Caco-2 (cell line): ENCODE measurements at regions of chr1 and their contacts with region 1.

Region 1: GRCh38 chr1:27300341-27301051 is 21.5 kb upstream of the TMEM222 start:
- DNase-seq: peak; percentile 56 to 74
- H3K4me3 ChIP-seq: no peak overlapping the region
- H3K4me3 Mint-ChIP-seq: no peak overlapping the region
- H3K27ac Mint-ChIP-seq: no peak overlapping the region
- H3K4me1 ChIP-seq: peaks cover 11% of the 10 kb centered on the region
- H3K4me1 Mint-ChIP-seq: peaks cover 7% of the 10 kb centered on the region
- H3K27me3 ChIP-seq: no peaks in the 10 kb centered on the region
- H3K27me3 Mint-ChIP-seq: no peaks in the 10 kb centered on the region
- CTCF ChIP-seq: peak; percentile 91 to 94

Region 2: GRCh38 chr1:26799479-26800142 is 500.9 kb before region 1 on chr1:
- CTCF ChIA-PET with region 1: no interaction called
- POLR2A ChIA-PET with region 1: no interaction called
- intact Hi-C with region 1: no loop called
- DNase-seq: no peak
- H3K4me3 ChIP-seq: no peak overlapping the region
- H3K4me3 Mint-ChIP-seq: no peak overlapping the region
- H3K27ac Mint-ChIP-seq: no peak overlapping the region
- H3K4me1 ChIP-seq: no peaks in the 10 kb centered on the region
- H3K4me1 Mint-ChIP-seq: no peaks in the 10 kb centered on the region
- H3K27me3 ChIP-seq: no peaks in the 10 kb centered on the region
- H3K27me3 Mint-ChIP-seq: no peaks in the 10 kb centered on the region
- CTCF ChIP-seq: no peak

Region 3: GRCh38 chr1:27349784-27350662 is 49.5 kb after region 1 on chr1:
- CTCF ChIA-PET with region 1: interaction called, 16 read pairs
- POLR2A ChIA-PET with region 1: no interaction called
- intact Hi-C with region 1: loop called (anchors 10 kb)
- DNase-seq: peak; percentile 83 to 84
- H3K4me3 ChIP-seq: peak overlapping the region; percentile 73
- H3K4me3 Mint-ChIP-seq: peak overlapping the region; percentile 90
- H3K27ac Mint-ChIP-seq: peak overlapping the region; percentile 84
- H3K4me1 ChIP-seq: 0 out of 2 replicates have a peak, but pooled peaks cover 15% of the 10 kb centered on the region
- H3K4me1 Mint-ChIP-seq: peaks cover 13% of the 10 kb centered on the region
- H3K27me3 ChIP-seq: no peaks in the 10 kb centered on the region
- H3K27me3 Mint-ChIP-seq: no peaks in the 10 kb centered on the region
- CTCF ChIP-seq: no peak

Region 4: DNA sequence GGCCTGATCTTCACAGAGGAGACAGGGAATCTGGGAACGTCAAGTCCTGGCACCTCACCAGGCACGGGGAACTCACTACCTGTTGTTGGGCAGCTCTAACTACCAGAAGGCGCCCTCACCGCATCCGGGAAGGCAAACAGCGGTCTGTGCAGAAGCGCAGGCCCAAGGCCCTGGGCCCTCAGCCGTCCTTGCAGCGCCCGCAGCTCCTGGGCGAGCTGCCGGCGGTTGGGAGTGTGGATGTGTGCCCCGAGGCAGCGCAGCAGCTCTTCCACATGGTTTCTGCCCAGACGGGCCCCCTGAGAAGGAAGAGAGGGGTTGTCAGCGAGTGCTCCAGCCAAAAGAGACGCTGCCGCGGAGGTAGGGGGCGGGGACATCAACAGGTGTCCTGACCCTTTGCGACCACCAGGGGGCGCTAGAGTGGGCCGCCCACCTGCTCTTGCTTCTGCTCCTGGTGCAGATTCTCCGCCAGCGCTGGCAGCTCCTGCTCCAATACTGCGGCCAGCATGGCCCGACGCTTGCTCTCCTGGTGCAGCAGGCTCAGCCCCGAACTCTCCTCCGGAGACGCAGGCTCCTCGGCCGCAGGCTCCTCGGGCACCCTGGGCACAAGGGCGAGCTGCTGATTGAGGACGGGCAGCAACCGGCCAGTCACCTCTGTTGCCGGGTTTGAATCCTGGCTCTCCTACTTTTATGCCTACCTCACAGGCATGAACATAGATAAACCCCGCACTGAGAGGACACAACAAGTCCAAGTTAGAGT is 57.0 kb after region 1 on chr1:
- CTCF ChIA-PET with region 1: interaction called, 3 read pairs
- POLR2A ChIA-PET with region 1: no interaction called
- intact Hi-C with region 1: loop called (anchors 10 kb)
- DNase-seq: peak; percentile 50 to 71
- H3K4me3 ChIP-seq: no peak overlapping the region
- H3K4me3 Mint-ChIP-seq: no peak overlapping the region
- H3K27ac Mint-ChIP-seq: no peak overlapping the region
- H3K4me1 ChIP-seq: no peaks in the 10 kb centered on the region
- H3K4me1 Mint-ChIP-seq: no peaks in the 10 kb centered on the region
- H3K27me3 ChIP-seq: no peaks in the 10 kb centered on the region
- H3K27me3 Mint-ChIP-seq: no peaks in the 10 kb centered on the region
- CTCF ChIP-seq: peak; percentile 79 to 83

Region 5: DNA sequence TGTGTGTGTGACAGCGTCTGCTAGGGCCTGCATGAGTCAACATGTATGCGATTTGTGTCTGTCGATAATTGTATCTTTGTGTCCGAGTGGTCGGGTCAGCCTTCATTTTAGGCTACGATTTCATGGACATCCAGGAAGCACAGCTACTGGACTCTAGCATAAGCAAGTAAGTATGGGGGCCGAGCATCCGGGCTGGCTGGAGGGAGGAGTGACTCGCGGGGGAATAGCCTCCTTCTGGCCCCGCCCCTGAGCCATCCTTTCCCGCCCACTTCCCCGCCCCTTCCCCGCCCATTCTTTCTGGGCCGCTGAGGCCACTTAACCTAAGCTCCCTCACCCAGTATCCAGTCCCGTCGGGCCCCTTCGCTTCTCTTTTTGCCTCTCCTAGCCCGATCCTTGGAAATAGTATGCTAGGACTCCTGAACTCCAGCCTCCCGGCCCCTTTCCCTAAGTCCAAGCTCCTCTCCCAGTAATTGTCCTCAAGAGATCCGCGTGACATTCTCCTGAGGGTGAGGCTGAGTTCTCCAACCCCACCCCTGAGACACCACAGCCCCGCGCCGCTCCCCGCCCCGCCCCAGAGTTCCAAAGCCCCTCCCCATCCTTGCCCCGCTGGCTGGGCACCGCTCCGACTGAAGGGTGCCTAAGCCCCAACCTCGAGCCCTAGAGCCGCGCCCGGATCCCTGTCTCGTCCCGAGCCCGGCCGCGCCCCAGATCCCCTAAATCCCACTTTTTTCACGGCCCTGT is 65.0 kb after region 1 on chr1:
- CTCF ChIA-PET with region 1: interaction called, 19 read pairs
- POLR2A ChIA-PET with region 1: no interaction called
- intact Hi-C with region 1: no loop called
- DNase-seq: peak; percentile 74 to 83
- H3K4me3 ChIP-seq: peak overlapping the region; percentile 46
- H3K4me3 Mint-ChIP-seq: peak overlapping the region; percentile 98
- H3K27ac Mint-ChIP-seq: peak overlapping the region; percentile 85
- H3K4me1 ChIP-seq: peaks cover 16% of the 10 kb centered on the region
- H3K4me1 Mint-ChIP-seq: peaks cover 7% of the 10 kb centered on the region
- H3K27me3 ChIP-seq: no peaks in the 10 kb centered on the region
- H3K27me3 Mint-ChIP-seq: no peaks in the 10 kb centered on the region
- CTCF ChIP-seq: no peak

Region 6: DNA sequence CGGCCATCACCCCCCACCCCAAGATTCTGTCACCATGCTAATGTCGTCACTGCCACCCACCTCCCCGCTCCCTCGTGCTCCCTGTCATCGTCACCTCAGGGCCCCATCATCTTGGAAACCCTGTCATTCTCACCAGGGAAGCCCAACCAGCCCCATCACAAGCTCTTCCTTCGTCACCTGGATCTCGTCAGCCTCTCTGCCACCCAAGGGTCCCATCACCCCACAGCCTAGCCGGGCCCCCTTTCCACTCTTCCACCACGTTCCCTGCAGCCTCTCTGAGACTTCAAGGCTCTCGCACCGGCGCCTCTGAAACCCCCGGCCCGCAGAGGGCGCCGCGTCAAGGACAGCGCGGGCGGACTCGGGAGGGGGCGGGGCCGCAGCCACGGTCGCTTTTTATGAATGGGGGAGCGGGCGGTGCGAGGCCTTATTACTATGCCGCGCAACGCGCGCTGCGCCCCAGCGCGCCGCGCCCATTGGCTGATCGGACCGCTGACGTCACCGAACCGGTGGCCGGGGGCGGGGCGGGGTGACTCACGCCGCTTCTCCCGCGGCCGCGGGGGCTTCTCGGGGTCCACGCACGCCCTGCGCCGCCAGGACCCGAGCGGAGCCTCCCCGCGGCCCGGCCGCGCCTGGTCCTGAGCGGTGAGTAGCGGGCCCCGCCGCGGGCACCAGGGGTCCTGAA is 91.7 kb after region 1 on chr1 and contains the start of gene GPR3:
- CTCF ChIA-PET with region 1: interaction called, 18 read pairs
- POLR2A ChIA-PET with region 1: no interaction called
- intact Hi-C with region 1: loop called (anchors 1 kb)
- DNase-seq: peak; percentile 90
- H3K4me3 ChIP-seq: peak within 1 kb of the TSS; percentile 42
- H3K4me3 Mint-ChIP-seq: peak within 1 kb of the TSS; percentile 73
- H3K27ac Mint-ChIP-seq: peak within 1 kb of the TSS; percentile 62
- H3K4me1 ChIP-seq: no peaks in the 10 kb centered on the region
- H3K4me1 Mint-ChIP-seq: peaks cover 7% of the 10 kb centered on the region
- H3K27me3 ChIP-seq: no peaks in the 10 kb centered on the region
- H3K27me3 Mint-ChIP-seq: no peaks in the 10 kb centered on the region
- CTCF ChIP-seq: peak; percentile 34 to 86
- total RNA-seq, gene GPR3: 0.91 and 1.2 TPM in 2 replicates